ENCODE measurements at regions of chr11 and their contacts with region 1.

Region 1: DNA sequence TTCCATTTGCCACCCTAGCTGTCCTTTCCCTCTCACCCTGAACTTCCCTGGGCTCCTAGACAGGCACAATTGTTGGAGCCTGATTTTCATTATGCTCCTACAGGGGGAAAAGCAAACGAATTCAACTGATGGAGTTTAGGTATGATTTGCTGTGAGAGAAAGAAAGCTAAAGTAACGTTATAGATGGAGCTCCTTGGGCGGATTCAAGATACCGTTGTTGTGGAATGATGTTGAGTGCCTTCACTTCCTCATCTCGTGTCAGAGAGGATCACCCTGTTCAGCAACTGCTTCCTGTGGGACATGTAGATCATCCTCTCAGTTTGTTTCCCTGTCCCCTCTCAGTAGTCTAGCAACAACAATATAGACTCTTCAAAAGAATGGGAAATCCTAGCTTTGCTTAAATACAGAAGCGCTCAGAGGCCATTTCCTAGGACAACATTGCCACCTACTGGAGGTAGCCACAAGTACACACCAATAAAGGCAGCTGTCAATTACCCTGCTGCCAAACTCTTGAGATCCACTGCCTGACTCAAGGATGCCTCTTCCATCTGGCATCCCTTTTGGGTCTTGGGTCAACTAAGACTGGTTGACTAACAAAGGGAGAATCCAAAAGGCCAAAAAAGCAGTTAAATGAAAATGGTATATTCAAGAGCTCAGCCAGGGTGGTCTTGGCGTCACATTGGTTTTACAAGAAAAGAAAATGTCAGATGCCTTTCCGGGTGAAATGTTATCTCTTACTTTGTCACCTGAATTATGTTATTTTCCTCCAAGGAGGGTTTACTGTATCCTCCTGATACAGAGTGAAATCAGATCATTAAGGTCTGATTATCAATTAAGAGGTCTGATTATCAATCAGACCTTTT is 13.5 kb upstream of the DTX4 start:
- DNase-seq: peak; percentile 86
- ATAC-seq: peak; percentile 97
- H3K4me3 ChIP-seq: no peak overlapping the region
- H3K4me3 Mint-ChIP-seq: peak overlapping the region; percentile 75
- H3K27ac ChIP-seq: no peak overlapping the region
- H3K27ac Mint-ChIP-seq: peak overlapping the region; percentile 73
- H3K4me1 ChIP-seq: peaks cover 11 to 14% of the 10 kb centered on the region in 2 donors
- H3K4me1 Mint-ChIP-seq: peaks cover 19% of the 10 kb centered on the region
- H3K27me3 ChIP-seq: no peaks in the 10 kb centered on the region
- H3K27me3 Mint-ChIP-seq: no peaks in the 10 kb centered on the region
- CTCF ChIP-seq: peak; percentile 94

Region 2: GRCh38 chr11:57792060-57792541 is 1366.3 kb before region 1 on chr11:
- CTCF ChIA-PET with region 1: no interaction called
- POLR2A ChIA-PET with region 1: no interaction called
- intact Hi-C with region 1: loop called (anchors 10 kb)
- DNase-seq: peak; percentile 94
- ATAC-seq: peak; percentile 89
- H3K4me3 ChIP-seq: peak overlapping the region; percentile 15 to 62 (median 36)
- H3K4me3 Mint-ChIP-seq: peak overlapping the region; percentile 80
- H3K27ac ChIP-seq: peak overlapping the region; percentile 87 to 97
- H3K27ac Mint-ChIP-seq: peak overlapping the region; percentile 93
- H3K4me1 ChIP-seq: peaks cover 53 to 57% of the 10 kb centered on the region in 2 donors
- H3K4me1 Mint-ChIP-seq: peaks cover 56% of the 10 kb centered on the region
- H3K27me3 ChIP-seq: no peaks in the 10 kb centered on the region
- H3K27me3 Mint-ChIP-seq: no peaks in the 10 kb centered on the region
- CTCF ChIP-seq: no peak

Region 3: DNA sequence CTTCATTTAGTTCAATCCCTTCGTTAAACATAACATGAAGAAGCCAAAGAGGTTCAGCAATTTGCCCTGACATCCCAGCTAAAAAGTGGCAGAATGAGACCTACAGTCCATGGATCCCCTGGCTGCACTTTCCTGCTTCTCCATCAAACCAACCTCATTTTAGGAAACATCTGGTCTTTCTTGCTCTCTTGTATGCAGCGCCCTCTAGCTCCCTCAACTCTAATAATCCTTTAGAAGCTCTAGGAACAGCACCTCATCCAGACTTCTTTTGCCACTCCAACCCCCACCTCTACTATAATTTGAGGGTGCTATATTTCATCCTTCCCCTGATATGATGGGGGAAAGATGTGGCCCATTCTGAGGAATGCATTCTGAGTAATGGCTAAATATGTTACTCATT is 528.6 kb before region 1 on chr11:
- CTCF ChIA-PET with region 1: interaction called, 17 read pairs
- POLR2A ChIA-PET with region 1: no interaction called
- intact Hi-C with region 1: no loop called
- DNase-seq: peak; percentile 50
- ATAC-seq: no peak
- H3K4me3 ChIP-seq: no peak overlapping the region
- H3K4me3 Mint-ChIP-seq: no peak overlapping the region
- H3K27ac ChIP-seq: no peak overlapping the region
- H3K27ac Mint-ChIP-seq: peak overlapping the region; percentile 8
- H3K4me1 ChIP-seq: peaks cover 3 to 5% of the 10 kb centered on the region in 2 donors
- H3K4me1 Mint-ChIP-seq: peaks cover 21% of the 10 kb centered on the region
- H3K27me3 ChIP-seq: no peaks in the 10 kb centered on the region
- H3K27me3 Mint-ChIP-seq: no peaks in the 10 kb centered on the region
- CTCF ChIP-seq: peak; percentile 47

Region 4: GRCh38 chr11:58659404-58659803 is 499.0 kb before region 1 on chr11:
- CTCF ChIA-PET with region 1: interaction called, 99 read pairs
- POLR2A ChIA-PET with region 1: no interaction called
- intact Hi-C with region 1: loop called (anchors 1 kb)
- DNase-seq: no peak
- ATAC-seq: no peak
- H3K4me3 ChIP-seq: no peak overlapping the region
- H3K4me3 Mint-ChIP-seq: no peak overlapping the region
- H3K27ac ChIP-seq: no peak overlapping the region
- H3K27ac Mint-ChIP-seq: no peak overlapping the region
- H3K4me1 ChIP-seq: no peaks in the 10 kb centered on the region
- H3K4me1 Mint-ChIP-seq: peaks cover under 1% of the 10 kb centered on the region
- H3K27me3 ChIP-seq: peaks cover 0 to 14% (median 0%) of the 10 kb centered on the region in 4 experiments
- H3K27me3 Mint-ChIP-seq: peaks cover 23% of the 10 kb centered on the region
- CTCF ChIP-seq: no peak

Region 5: DNA sequence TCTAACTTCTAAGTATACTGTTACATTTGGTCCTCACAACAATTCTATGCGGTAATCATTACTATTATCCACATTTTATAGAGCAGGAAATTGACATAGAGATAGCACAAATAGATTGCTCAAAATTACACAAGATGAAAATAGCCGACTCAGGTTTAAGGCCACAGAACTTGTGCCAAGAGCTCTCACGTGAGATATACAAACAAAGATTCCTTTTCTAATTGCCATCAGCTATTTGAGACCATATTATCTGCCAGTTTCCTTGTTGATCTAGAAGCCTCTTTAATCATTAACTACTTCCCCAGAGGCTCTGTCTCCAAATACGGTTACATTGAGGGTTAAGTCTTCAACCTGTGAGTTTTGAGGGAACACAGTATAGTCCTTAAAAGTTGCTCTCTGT is 133.3 kb before region 1 on chr11:
- CTCF ChIA-PET with region 1: no interaction called
- POLR2A ChIA-PET with region 1: no interaction called
- intact Hi-C with region 1: no loop called
- DNase-seq: no peak
- ATAC-seq: no peak
- H3K4me3 ChIP-seq: no peak overlapping the region
- H3K4me3 Mint-ChIP-seq: no peak overlapping the region
- H3K27ac ChIP-seq: no peak overlapping the region
- H3K27ac Mint-ChIP-seq: no peak overlapping the region
- H3K4me1 ChIP-seq: no peaks in the 10 kb centered on the region
- H3K4me1 Mint-ChIP-seq: peaks cover 10% of the 10 kb centered on the region
- H3K27me3 ChIP-seq: no peaks in the 10 kb centered on the region
- H3K27me3 Mint-ChIP-seq: no peaks in the 10 kb centered on the region
- CTCF ChIP-seq: no peak

Region 6: GRCh38 chr11:59053387-59053786 is 105.0 kb before region 1 on chr11:
- CTCF ChIA-PET with region 1: interaction called, 24 read pairs
- POLR2A ChIA-PET with region 1: interaction called, 7 read pairs
- intact Hi-C with region 1: loop called (anchors 1 kb)
- DNase-seq: peak; percentile 77
- ATAC-seq: no peak
- H3K4me3 ChIP-seq: no peak overlapping the region
- H3K4me3 Mint-ChIP-seq: peak overlapping the region; percentile 36
- H3K27ac ChIP-seq: no peak overlapping the region
- H3K27ac Mint-ChIP-seq: no peak overlapping the region
- H3K4me1 ChIP-seq: peaks cover 58 to 66% of the 10 kb centered on the region in 2 donors
- H3K4me1 Mint-ChIP-seq: peaks cover 68% of the 10 kb centered on the region
- H3K27me3 ChIP-seq: no peaks in the 10 kb centered on the region
- H3K27me3 Mint-ChIP-seq: no peaks in the 10 kb centered on the region
- CTCF ChIP-seq: peak; percentile 73

Region 7: GRCh38 chr11:59186130-59186594 is 27.7 kb after region 1 on chr11:
- CTCF ChIA-PET with region 1: interaction called, 13 read pairs
- POLR2A ChIA-PET with region 1: no interaction called
- intact Hi-C with region 1: no loop called
- DNase-seq: peak; percentile 68
- ATAC-seq: peak; percentile 59
- H3K4me3 ChIP-seq: no peak overlapping the region
- H3K4me3 Mint-ChIP-seq: no peak overlapping the region
- H3K27ac ChIP-seq: no peak overlapping the region
- H3K27ac Mint-ChIP-seq: no peak overlapping the region
- H3K4me1 ChIP-seq: peaks cover 0 to 2% of the 10 kb centered on the region in 2 donors
- H3K4me1 Mint-ChIP-seq: peaks cover 20% of the 10 kb centered on the region
- H3K27me3 ChIP-seq: no peaks in the 10 kb centered on the region
- H3K27me3 Mint-ChIP-seq: no peaks in the 10 kb centered on the region
- CTCF ChIP-seq: peak; percentile 69

Measured in B cell (primary cell).